ENCODE measurements at regions of chr3 and their contacts with region 1.

Region 1: DNA sequence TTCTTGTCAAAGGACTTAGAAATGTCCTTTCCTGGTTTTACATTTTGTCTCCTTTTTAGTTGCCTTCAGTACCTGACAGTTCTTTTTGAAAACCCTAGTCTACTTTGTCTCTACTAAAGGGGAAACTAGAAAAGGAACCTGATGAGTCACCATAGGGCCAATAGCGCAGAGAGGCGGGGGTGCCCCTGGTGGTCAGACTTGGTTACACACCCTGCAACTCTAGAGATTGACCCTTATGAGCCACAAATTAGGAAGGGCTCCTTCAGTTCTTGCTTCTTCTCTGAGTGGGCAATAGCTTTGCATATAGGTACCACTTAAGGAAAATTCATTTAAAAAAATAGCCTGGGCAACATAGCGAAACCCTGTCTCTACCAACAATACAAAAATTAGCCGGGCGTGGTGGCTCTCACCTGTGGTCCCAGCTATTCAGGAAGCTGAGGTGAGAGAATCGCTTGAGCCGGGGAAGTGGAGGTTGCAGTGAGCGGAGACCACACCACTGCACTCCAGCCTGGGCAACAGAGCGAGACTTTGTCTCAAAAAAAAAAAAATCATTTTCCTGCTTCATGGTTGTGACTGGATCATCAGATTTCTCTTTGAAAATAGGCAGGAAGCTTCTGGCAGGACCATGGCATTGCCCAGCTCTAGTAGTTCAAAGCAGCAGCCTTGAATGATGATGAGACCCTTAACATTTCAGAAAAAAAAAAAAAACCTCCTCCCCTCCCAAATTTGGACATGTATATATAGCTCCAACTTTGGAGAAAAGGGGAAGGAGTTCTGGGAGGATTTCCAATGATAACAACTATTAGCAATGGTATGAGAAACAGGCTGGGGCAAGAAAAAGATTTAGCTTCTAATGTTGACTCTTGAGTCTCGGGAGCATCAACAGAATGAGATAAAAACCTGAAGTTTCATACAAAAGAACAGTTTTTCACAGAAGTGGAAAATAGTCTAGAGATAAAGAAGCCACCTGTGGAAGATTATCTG is 45.2 kb upstream of the RASA2 start:
- DNase-seq: peak; percentile 62 to 76
- ATAC-seq: peak; percentile 47 to 91 (median 84)
- H3K4me3 ChIP-seq: peak overlapping the region in 3 of 10 donors; percentile 2 to 23 (median 5)
- H3K27ac ChIP-seq: peak overlapping the region; percentile 75 to 92 (median 84)
- H3K4me1 ChIP-seq: peaks cover 11 to 92% (median 73%) of the 10 kb centered on the region in 9 donors
- H3K27me3 ChIP-seq: no peaks in the 10 kb centered on the region
- CTCF ChIP-seq: peak; percentile 54 to 90 (median 85)

Region 2: GRCh38 chr3:141402476-141403171 is 39.0 kb before region 1 on chr3:
- intact Hi-C with region 1: loop called in 6 of 10 experiments (anchors 2 to 5 kb)
- DNase-seq: peak; percentile 80 to 81
- ATAC-seq: peak; percentile 77 to 90 (median 82)
- H3K4me3 ChIP-seq: peak overlapping the region; percentile 34 to 86 (median 76)
- H3K27ac ChIP-seq: peak overlapping the region; percentile 89 to 100 (median 99)
- H3K4me1 ChIP-seq: peaks cover 11 to 80% (median 71%) of the 10 kb centered on the region in 9 donors
- H3K27me3 ChIP-seq: no peaks in the 10 kb centered on the region
- CTCF ChIP-seq: peak in 4 of 9 donors; percentile 10 to 17 (median 13)